GM12878 (cell line): ENCODE measurements at regions of chr1 and their contacts with region 1.

Region 1: GRCh38 chr1:234610348-234611152 is 572 bp upstream of the IRF2BP2 start:
- DNase-seq: peak; percentile 75
- ATAC-seq: peak; percentile 54
- H3K4me3 ChIP-seq: peak overlapping the region; percentile 74
- H3K27ac ChIP-seq: peak overlapping the region; percentile 98
- H3K4me1 ChIP-seq: peaks cover 24% of the 10 kb centered on the region
- H3K27me3 ChIP-seq: no peaks in the 10 kb centered on the region
- CTCF ChIP-seq: no peak
- EP300 ChIP-seq: no peak; a peak in 2 of 4 replicates
- POLR2A ChIP-seq: peak; percentile 97
- RAD21 ChIP-seq: no peak

Region 2: GRCh38 chr1:234553156-234553863 is 57.2 kb before region 1 on chr1:
- CTCF ChIA-PET with region 1: no interaction called
- POLR2A ChIA-PET with region 1: no interaction called
- RAD21 ChIA-PET with region 1: no interaction called
- SMC1A ChIA-PET with region 1: no interaction called
- in situ Hi-C with region 1: no loop called
- intact Hi-C with region 1: no loop called
- DNase-seq: no peak
- ATAC-seq: no peak
- H3K4me3 ChIP-seq: no peak overlapping the region
- H3K27ac ChIP-seq: no peak overlapping the region
- H3K4me1 ChIP-seq: no peaks in the 10 kb centered on the region
- H3K27me3 ChIP-seq: no peaks in the 10 kb centered on the region
- CTCF ChIP-seq: no peak
- EP300 ChIP-seq: no peak
- POLR2A ChIP-seq: no peak
- RAD21 ChIP-seq: no peak

Region 3: GRCh38 chr1:234599617-234600417 is 10.7 kb before region 1 on chr1:
- CTCF ChIA-PET with region 1: interaction called, 5 read pairs
- POLR2A ChIA-PET with region 1: interaction called, 40 read pairs
- RAD21 ChIA-PET with region 1: interaction called, 65 read pairs
- SMC1A ChIA-PET with region 1: interaction called, 45 read pairs
- in situ Hi-C with region 1: no loop called
- intact Hi-C with region 1: no loop called
- DNase-seq: no peak
- ATAC-seq: peak; percentile 76
- H3K4me3 ChIP-seq: peak overlapping the region; percentile 67; the same call in 1 of the 2 replicates
- H3K27ac ChIP-seq: peak overlapping the region; percentile 75
- H3K4me1 ChIP-seq: peaks cover 22% of the 10 kb centered on the region
- H3K27me3 ChIP-seq: no peaks in the 10 kb centered on the region
- CTCF ChIP-seq: 0 out of 6 replicates have a peak, but pooled peaks of 1 of the 3 experiments have one; percentile 5
- EP300 ChIP-seq: 0 out of 4 replicates have a peak, but pooled peaks of 1 of the 2 experiments have one; percentile 42
- POLR2A ChIP-seq: peak; percentile 70; the same call in 1 of the 2 replicates
- RAD21 ChIP-seq: no peak

Region 4: GRCh38 chr1:234670967-234671626 is 60.5 kb after region 1 on chr1:
- CTCF ChIA-PET with region 1: no interaction called
- POLR2A ChIA-PET with region 1: interaction called, 7 read pairs
- RAD21 ChIA-PET with region 1: interaction called, 6 read pairs
- SMC1A ChIA-PET with region 1: interaction called, 15 read pairs
- in situ Hi-C with region 1: no loop called
- intact Hi-C with region 1: loop called (anchors 5 kb)
- DNase-seq: peak; percentile 31
- ATAC-seq: peak; percentile 49
- H3K4me3 ChIP-seq: no peak overlapping the region
- H3K27ac ChIP-seq: peak overlapping the region; percentile 59
- H3K4me1 ChIP-seq: peaks cover 16% of the 10 kb centered on the region
- H3K27me3 ChIP-seq: no peaks in the 10 kb centered on the region
- CTCF ChIP-seq: no peak
- EP300 ChIP-seq: 0 out of 4 replicates have a peak, but pooled peaks of 1 of the 2 experiments have one; percentile 33
- POLR2A ChIP-seq: no peak
- RAD21 ChIP-seq: no peak

Region 5: DNA sequence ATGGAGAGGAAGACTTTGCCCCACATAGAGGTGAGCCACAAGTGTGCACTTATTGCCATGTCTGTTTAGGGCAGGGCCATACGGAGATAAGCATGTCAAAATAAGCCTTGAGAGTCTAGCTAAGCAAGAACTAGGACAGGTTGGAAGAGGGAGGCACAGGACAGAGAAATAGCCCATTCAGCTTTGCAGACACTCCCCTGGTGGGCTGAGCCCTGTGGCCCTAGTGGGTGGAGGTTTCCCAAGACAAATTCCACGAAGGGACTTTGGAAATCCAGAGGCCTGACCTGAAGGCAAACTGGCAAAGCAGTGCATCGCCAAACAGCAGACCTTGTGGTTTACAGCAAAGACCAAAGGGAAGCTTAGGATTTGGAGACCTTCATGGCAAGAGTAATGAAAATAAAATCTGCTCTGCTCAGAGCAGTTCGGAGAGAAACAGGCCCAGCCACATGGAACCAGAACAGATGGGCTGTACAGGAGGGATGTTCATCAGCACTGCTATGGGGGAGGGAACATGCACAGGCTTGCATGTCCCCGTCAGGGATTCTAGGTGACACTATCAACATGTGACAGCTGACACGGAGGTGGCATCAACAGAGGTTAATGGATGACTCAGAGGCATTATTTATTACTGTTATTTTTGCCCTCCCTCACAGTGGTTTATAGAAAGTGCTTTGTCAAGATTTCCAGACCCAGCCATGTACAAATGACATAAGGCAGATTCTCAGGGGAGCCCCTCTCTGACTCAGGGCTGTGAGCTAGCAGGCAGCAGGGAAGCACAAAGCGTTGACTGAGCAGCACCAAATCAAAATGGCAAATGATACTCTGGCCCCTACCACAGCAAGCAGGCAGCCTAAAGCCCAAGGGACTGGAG is 89.5 kb after region 1 on chr1:
- CTCF ChIA-PET with region 1: interaction called, 4 read pairs
- POLR2A ChIA-PET with region 1: interaction called, 13 read pairs
- RAD21 ChIA-PET with region 1: interaction called, 74 read pairs
- SMC1A ChIA-PET with region 1: interaction called, 31 read pairs
- in situ Hi-C with region 1: no loop called
- intact Hi-C with region 1: no loop called
- DNase-seq: peak; percentile 83
- ATAC-seq: peak; percentile 89
- H3K4me3 ChIP-seq: no peak overlapping the region
- H3K27ac ChIP-seq: peak overlapping the region; percentile 43
- H3K4me1 ChIP-seq: peaks cover 32% of the 10 kb centered on the region
- H3K27me3 ChIP-seq: no peaks in the 10 kb centered on the region
- CTCF ChIP-seq: no peak
- EP300 ChIP-seq: peak; percentile 95 to 96
- POLR2A ChIP-seq: 0 out of 2 replicates have a peak, but pooled peaks have one; percentile 23
- RAD21 ChIP-seq: 0 out of 2 replicates have a peak, but pooled peaks have one; percentile 28

Region 6: GRCh38 chr1:234772345-234773147 is 162.0 kb after region 1 on chr1:
- CTCF ChIA-PET with region 1: interaction called, 12 read pairs
- POLR2A ChIA-PET with region 1: interaction called, 36 read pairs
- RAD21 ChIA-PET with region 1: interaction called, 92 read pairs
- SMC1A ChIA-PET with region 1: interaction called, 92 read pairs
- in situ Hi-C with region 1: no loop called
- intact Hi-C with region 1: loop called (anchors 1 kb)
- DNase-seq: peak; percentile 97
- ATAC-seq: peak; percentile 92
- H3K4me3 ChIP-seq: peak overlapping the region; percentile 13; the same call in 1 of the 2 replicates
- H3K27ac ChIP-seq: peak overlapping the region; percentile 89
- H3K4me1 ChIP-seq: peaks cover 37% of the 10 kb centered on the region
- H3K27me3 ChIP-seq: peaks cover 6 to 11% of the 10 kb centered on the region in 2 experiments; a peak in 3 of 4 replicates
- CTCF ChIP-seq: no peak
- EP300 ChIP-seq: peak; percentile 88 to 93; a peak in 3 of 4 replicates
- POLR2A ChIP-seq: peak; percentile 77
- RAD21 ChIP-seq: 0 out of 2 replicates have a peak, but pooled peaks have one; percentile 13

Region 7: GRCh38 chr1:234955107-234955731 is 344.7 kb after region 1 on chr1:
- CTCF ChIA-PET with region 1: no interaction called
- POLR2A ChIA-PET with region 1: interaction called, 10 read pairs
- RAD21 ChIA-PET with region 1: interaction called, 13 read pairs
- SMC1A ChIA-PET with region 1: interaction called, 20 read pairs
- in situ Hi-C with region 1: no loop called
- intact Hi-C with region 1: no loop called
- DNase-seq: no peak
- ATAC-seq: peak; percentile 63
- H3K4me3 ChIP-seq: no peak overlapping the region; the same call in 1 of the 2 replicates
- H3K27ac ChIP-seq: peak overlapping the region; percentile 93
- H3K4me1 ChIP-seq: peaks cover 48% of the 10 kb centered on the region
- H3K27me3 ChIP-seq: no peaks in the 10 kb centered on the region
- CTCF ChIP-seq: no peak
- EP300 ChIP-seq: peak in 1 of 2 experiments; percentile 33; a peak in 1 of 4 replicates
- POLR2A ChIP-seq: 0 out of 2 replicates have a peak, but pooled peaks have one; percentile 43
- RAD21 ChIP-seq: no peak

Region 8: GRCh38 chr1:234978397-234979295 is 368.1 kb after region 1 on chr1:
- CTCF ChIA-PET with region 1: interaction called, 7 read pairs
- POLR2A ChIA-PET with region 1: interaction called, 5 read pairs
- RAD21 ChIA-PET with region 1: interaction called, 35 read pairs
- SMC1A ChIA-PET with region 1: interaction called, 20 read pairs
- in situ Hi-C with region 1: loop called (anchors 10 kb)
- intact Hi-C with region 1: loop called (anchors 5 kb)
- DNase-seq: peak; percentile 94
- ATAC-seq: peak; percentile 66
- H3K4me3 ChIP-seq: peak overlapping the region; percentile 29
- H3K27ac ChIP-seq: peak overlapping the region; percentile 98
- H3K4me1 ChIP-seq: peaks cover 76% of the 10 kb centered on the region
- H3K27me3 ChIP-seq: no peaks in the 10 kb centered on the region
- CTCF ChIP-seq: peak in 2 of 3 experiments; percentile 13 to 16; a peak in 2 of 6 replicates
- EP300 ChIP-seq: peak; percentile 96 to 99
- POLR2A ChIP-seq: 0 out of 2 replicates have a peak, but pooled peaks have one; percentile 56
- RAD21 ChIP-seq: peak; percentile 44